B cell (primary cell): ENCODE measurements at regions of chrX and their contacts with region 1.

Region 1: GRCh38 chrX:48937054-48937907 is 18.5 kb upstream of the PIM2 start:
- DNase-seq: peak; percentile 90
- ATAC-seq: peak; percentile 58
- H3K4me3 ChIP-seq: peak overlapping the region in 4 of 5 experiments; percentile 33 to 57 (median 36)
- H3K4me3 Mint-ChIP-seq: peak overlapping the region; percentile 84
- H3K27ac ChIP-seq: peak overlapping the region; percentile 99
- H3K27ac Mint-ChIP-seq: peak overlapping the region; percentile 99
- H3K4me1 ChIP-seq: peaks cover 91 to 97% of the 10 kb centered on the region in 2 donors
- H3K4me1 Mint-ChIP-seq: peaks cover 82% of the 10 kb centered on the region
- H3K27me3 ChIP-seq: no peaks in the 10 kb centered on the region
- H3K27me3 Mint-ChIP-seq: no peaks in the 10 kb centered on the region
- CTCF ChIP-seq: peak; percentile 67

Region 2: GRCh38 chrX:48574270-48575266 is 362.7 kb before region 1 on chrX and contains the start of gene RBM3:
- CTCF ChIA-PET with region 1: no interaction called
- POLR2A ChIA-PET with region 1: no interaction called
- intact Hi-C with region 1: loop called (anchors 1 kb)
- DNase-seq: peak; percentile 94
- ATAC-seq: peak; percentile 95
- H3K4me3 ChIP-seq: peak within 1 kb of the TSS; percentile 60 to 88 (median 73)
- H3K4me3 Mint-ChIP-seq: peak within 1 kb of the TSS; percentile 88
- H3K27ac ChIP-seq: peak within 1 kb of the TSS; percentile 98 to 99
- H3K27ac Mint-ChIP-seq: peak within 1 kb of the TSS; percentile 97
- H3K4me1 ChIP-seq: peaks cover 16 to 22% of the 10 kb centered on the region in 2 donors
- H3K4me1 Mint-ChIP-seq: peaks cover 21% of the 10 kb centered on the region
- H3K27me3 ChIP-seq: no peaks in the 10 kb centered on the region
- H3K27me3 Mint-ChIP-seq: no peaks in the 10 kb centered on the region
- CTCF ChIP-seq: peak; percentile 43
- total RNA-seq, gene RBM3: 190 and 200 TPM in 2 replicates

Region 3: DNA sequence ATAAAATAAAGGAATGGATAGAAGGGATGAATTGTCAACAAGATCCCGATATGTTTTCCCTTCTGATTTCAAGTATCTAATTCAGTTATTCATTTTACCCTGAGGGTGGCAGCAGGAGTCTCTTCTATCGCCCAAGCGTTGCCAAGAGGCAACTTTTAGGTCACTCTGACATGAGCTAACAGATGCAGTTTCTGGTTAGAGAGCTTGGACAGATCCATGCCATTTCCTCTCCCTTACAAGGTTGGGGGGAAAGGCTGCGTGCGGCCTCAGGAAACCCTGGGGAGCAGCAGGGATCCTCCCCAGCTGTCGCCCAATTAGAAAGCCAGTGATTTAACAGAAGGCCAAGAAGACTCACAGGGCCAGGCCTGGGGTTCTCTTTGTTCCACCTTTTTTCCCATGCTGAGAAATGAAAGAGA is 288.9 kb before region 1 on chrX:
- CTCF ChIA-PET with region 1: interaction called, 18 read pairs
- POLR2A ChIA-PET with region 1: interaction called, 4 read pairs
- intact Hi-C with region 1: no loop called
- DNase-seq: peak; percentile 60
- ATAC-seq: peak; percentile 73
- H3K4me3 ChIP-seq: no peak overlapping the region
- H3K4me3 Mint-ChIP-seq: no peak overlapping the region
- H3K27ac ChIP-seq: no peak overlapping the region
- H3K27ac Mint-ChIP-seq: peak overlapping the region; percentile 70
- H3K4me1 ChIP-seq: no peaks in the 10 kb centered on the region
- H3K4me1 Mint-ChIP-seq: no peaks in the 10 kb centered on the region
- H3K27me3 ChIP-seq: no peaks in the 10 kb centered on the region
- H3K27me3 Mint-ChIP-seq: no peaks in the 10 kb centered on the region
- CTCF ChIP-seq: peak; percentile 65

Region 4: GRCh38 chrX:48801280-48802088 is 135.8 kb before region 1 on chrX and contains the start of gene HDAC6:
- CTCF ChIA-PET with region 1: no interaction called
- POLR2A ChIA-PET with region 1: interaction called, 4 read pairs
- intact Hi-C with region 1: loop called (anchors 5 kb)
- DNase-seq: peak; percentile 97
- ATAC-seq: peak; percentile 80
- H3K4me3 ChIP-seq: peak within 1 kb of the TSS; percentile 65 to 82 (median 76)
- H3K4me3 Mint-ChIP-seq: peak within 1 kb of the TSS; percentile 96
- H3K27ac ChIP-seq: peak within 1 kb of the TSS; percentile 95 to 96
- H3K27ac Mint-ChIP-seq: peak within 1 kb of the TSS; percentile 98
- H3K4me1 ChIP-seq: peaks cover 4 to 16% of the 10 kb centered on the region in 2 donors
- H3K4me1 Mint-ChIP-seq: peaks cover 14% of the 10 kb centered on the region
- H3K27me3 ChIP-seq: no peaks in the 10 kb centered on the region
- H3K27me3 Mint-ChIP-seq: no peaks in the 10 kb centered on the region
- CTCF ChIP-seq: no peak
- total RNA-seq, gene HDAC6: 168 and 170 TPM in 2 replicates

Region 5: GRCh38 chrX:48897621-48898306 is 39.5 kb before region 1 on chrX and contains the starts of genes PQBP1 and TIMM17B:
- CTCF ChIA-PET with region 1: interaction called, 30 read pairs
- POLR2A ChIA-PET with region 1: interaction called, 15 read pairs
- intact Hi-C with region 1: no loop called
- DNase-seq: peak; percentile 95
- ATAC-seq: peak; percentile 88
- H3K4me3 ChIP-seq: peak within 1 kb of the TSS; percentile 81 to 91 (median 86)
- H3K4me3 Mint-ChIP-seq: peak within 1 kb of the TSS; percentile 89
- H3K27ac ChIP-seq: peak within 1 kb of the TSS; percentile 93 to 94
- H3K27ac Mint-ChIP-seq: peak within 1 kb of the TSS; percentile 94
- H3K4me1 ChIP-seq: peaks cover 12 to 20% of the 10 kb centered on the region in 2 donors
- H3K4me1 Mint-ChIP-seq: peaks cover 22% of the 10 kb centered on the region
- H3K27me3 ChIP-seq: no peaks in the 10 kb centered on the region
- H3K27me3 Mint-ChIP-seq: no peaks in the 10 kb centered on the region
- CTCF ChIP-seq: no peak
- total RNA-seq, gene PQBP1: 89.5 and 89.9 TPM in 2 replicates
- total RNA-seq, gene TIMM17B: 50.0 and 54.3 TPM in 2 replicates

Region 6: GRCh38 chrX:48917139-48918001 is 19.9 kb before region 1 on chrX:
- CTCF ChIA-PET with region 1: interaction called, 28 read pairs
- POLR2A ChIA-PET with region 1: interaction called, 101 read pairs
- intact Hi-C with region 1: loop called (anchors 1 kb)
- DNase-seq: peak; percentile 92
- ATAC-seq: peak; percentile 46
- H3K4me3 ChIP-seq: peak overlapping the region; percentile 67 to 94 (median 86)
- H3K4me3 Mint-ChIP-seq: peak overlapping the region; percentile 98
- H3K27ac ChIP-seq: peak overlapping the region; percentile 84
- H3K27ac Mint-ChIP-seq: peak overlapping the region; percentile 96
- H3K4me1 ChIP-seq: peaks cover 34 to 56% of the 10 kb centered on the region in 2 donors
- H3K4me1 Mint-ChIP-seq: peaks cover 51% of the 10 kb centered on the region
- H3K27me3 ChIP-seq: no peaks in the 10 kb centered on the region
- H3K27me3 Mint-ChIP-seq: no peaks in the 10 kb centered on the region
- CTCF ChIP-seq: peak; percentile 74